ENCODE measurements at regions of chr4 and their contacts with region 1.

Region 1: GRCh38 chr4:184474263-184475095 is at the start of gene IRF2:
- DNase-seq: peak; percentile 98
- H3K4me3 Mint-ChIP-seq: peak within 1 kb of the TSS; percentile 99
- H3K27ac Mint-ChIP-seq: peak within 1 kb of the TSS; percentile 98
- H3K4me1 Mint-ChIP-seq: peaks cover 52% of the 10 kb centered on the region
- H3K27me3 Mint-ChIP-seq: no peaks in the 10 kb centered on the region
- total RNA-seq, gene IRF2: 48.7 and 50.0 TPM in 2 replicates

Region 2: DNA sequence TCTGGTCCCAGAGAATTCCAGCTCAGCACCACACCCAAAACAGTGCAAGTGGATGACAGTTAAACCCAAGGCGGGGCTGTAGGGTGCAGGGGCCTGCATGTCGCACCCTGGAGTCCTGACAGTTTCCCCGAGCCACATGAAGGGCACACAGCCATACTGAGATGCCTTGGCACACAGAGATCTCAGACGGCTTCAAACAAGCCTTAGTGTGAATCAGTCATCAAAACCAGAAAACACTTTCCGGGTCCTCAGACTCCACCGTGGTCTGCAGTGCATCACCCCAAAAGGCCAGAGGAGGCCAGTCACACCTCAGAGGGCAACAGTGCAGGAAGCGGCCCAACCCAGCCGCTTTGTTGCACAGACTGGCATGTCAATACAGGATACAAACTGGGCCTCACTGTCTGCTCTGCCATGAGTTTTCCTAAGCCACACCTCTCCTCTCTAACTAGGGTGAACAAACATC is 192.2 kb before region 1 on chr4:
- intact Hi-C with region 1: loop called (anchors 1 kb)
- DNase-seq: peak; percentile 87
- H3K4me3 Mint-ChIP-seq: peak overlapping the region; percentile 66
- H3K27ac Mint-ChIP-seq: peak overlapping the region; percentile 90
- H3K4me1 Mint-ChIP-seq: peaks cover 62% of the 10 kb centered on the region
- H3K27me3 Mint-ChIP-seq: no peaks in the 10 kb centered on the region

Region 3: DNA sequence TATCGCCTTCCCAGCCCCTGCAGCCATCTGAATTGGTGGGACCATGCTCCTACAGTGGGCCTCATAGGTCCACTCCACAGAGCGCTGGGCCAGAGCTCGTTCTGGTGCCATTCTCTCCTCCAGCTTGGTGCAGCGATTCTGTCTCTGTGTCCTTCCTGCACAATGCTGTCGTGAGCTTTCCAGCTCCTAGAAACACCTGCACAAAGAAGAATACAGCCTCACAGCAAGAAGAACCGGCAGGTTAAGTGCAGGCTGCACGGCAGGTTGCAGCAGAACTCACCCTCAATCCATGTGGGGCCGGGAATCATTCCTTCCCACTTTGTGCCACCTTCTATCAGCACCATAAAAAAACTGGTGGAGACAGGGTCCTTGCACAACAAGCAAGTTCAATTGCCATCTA is 155.6 kb before region 1 on chr4:
- intact Hi-C with region 1: loop called (anchors 2 kb)
- DNase-seq: peak; percentile 56
- H3K4me3 Mint-ChIP-seq: peak overlapping the region; percentile 21
- H3K27ac Mint-ChIP-seq: peak overlapping the region; percentile 93
- H3K4me1 Mint-ChIP-seq: peaks cover 50% of the 10 kb centered on the region
- H3K27me3 Mint-ChIP-seq: no peaks in the 10 kb centered on the region

Region 4: DNA sequence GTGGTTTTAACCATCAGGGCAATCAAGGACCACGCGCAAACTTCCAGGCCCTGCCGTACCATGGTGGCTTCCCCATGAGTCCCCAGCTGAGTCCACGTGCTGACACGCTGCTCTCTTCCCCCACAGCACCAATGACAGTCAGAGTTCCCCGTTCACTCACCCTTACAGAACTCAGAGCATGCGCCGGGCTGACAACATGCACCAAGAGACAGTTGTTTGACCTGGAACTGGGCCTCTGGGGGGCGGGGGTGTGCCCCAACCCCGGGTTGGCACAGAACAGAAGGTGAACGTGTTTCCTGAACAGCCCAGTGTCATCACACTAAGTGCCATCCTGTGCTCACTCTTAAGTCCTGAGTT is 29.5 kb before region 1 on chr4:
- intact Hi-C with region 1: no loop called
- DNase-seq: no peak
- H3K4me3 Mint-ChIP-seq: no peak overlapping the region
- H3K27ac Mint-ChIP-seq: no peak overlapping the region
- H3K4me1 Mint-ChIP-seq: peaks cover 71% of the 10 kb centered on the region
- H3K27me3 Mint-ChIP-seq: no peaks in the 10 kb centered on the region

Region 5: GRCh38 chr4:184457535-184458249 is 16.8 kb before region 1 on chr4:
- intact Hi-C with region 1: loop called (anchors 1 kb)
- DNase-seq: no peak
- H3K4me3 Mint-ChIP-seq: no peak overlapping the region
- H3K27ac Mint-ChIP-seq: peak overlapping the region; percentile 18
- H3K4me1 Mint-ChIP-seq: peaks cover 60% of the 10 kb centered on the region
- H3K27me3 Mint-ChIP-seq: no peaks in the 10 kb centered on the region

Region 6: DNA sequence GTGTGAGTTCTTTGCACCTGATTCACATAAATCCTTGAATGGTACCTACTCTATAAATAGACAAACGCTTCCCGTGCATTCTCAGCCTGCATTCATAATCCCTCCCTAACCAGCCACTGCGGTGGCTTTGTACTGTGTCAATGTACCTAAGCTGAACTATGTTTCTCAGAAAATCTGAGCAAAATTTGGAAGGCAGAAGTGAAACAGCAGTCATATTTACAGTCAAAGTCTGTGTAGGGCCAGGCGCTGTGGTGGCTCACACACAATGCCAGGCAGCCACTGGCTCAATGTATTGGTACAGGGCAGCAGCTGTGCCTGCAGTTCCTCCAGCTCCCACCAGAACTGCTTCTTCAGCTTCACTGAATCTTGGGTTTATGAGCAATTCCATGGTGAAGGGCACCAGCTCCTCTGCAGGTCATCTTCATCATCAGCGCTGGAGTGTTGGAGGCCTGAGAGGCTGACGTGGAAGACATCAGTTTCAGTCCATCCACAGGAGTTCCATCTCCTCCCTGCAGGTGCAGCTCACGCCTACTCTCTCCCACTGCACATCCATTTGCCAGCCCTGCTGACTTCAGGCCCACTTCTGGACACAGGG is 32.1 kb after region 1 on chr4:
- intact Hi-C with region 1: no loop called
- DNase-seq: peak; percentile 82
- H3K4me3 Mint-ChIP-seq: peak overlapping the region; percentile 23
- H3K27ac Mint-ChIP-seq: peak overlapping the region; percentile 64
- H3K4me1 Mint-ChIP-seq: peaks cover 35% of the 10 kb centered on the region
- H3K27me3 Mint-ChIP-seq: no peaks in the 10 kb centered on the region

Region 7: GRCh38 chr4:184538023-184538599 is 63.6 kb after region 1 on chr4:
- intact Hi-C with region 1: loop called (anchors 1 kb)
- DNase-seq: peak; percentile 89
- H3K4me3 Mint-ChIP-seq: peak overlapping the region; percentile 90
- H3K27ac Mint-ChIP-seq: peak overlapping the region; percentile 92
- H3K4me1 Mint-ChIP-seq: peaks cover 33% of the 10 kb centered on the region
- H3K27me3 Mint-ChIP-seq: no peaks in the 10 kb centered on the region

Region 8: GRCh38 chr4:184583738-184584502 is 109.4 kb after region 1 on chr4:
- intact Hi-C with region 1: loop called (anchors 2 kb)
- DNase-seq: peak; percentile 68
- H3K4me3 Mint-ChIP-seq: peak overlapping the region; percentile 19
- H3K27ac Mint-ChIP-seq: peak overlapping the region; percentile 75
- H3K4me1 Mint-ChIP-seq: peaks cover 23% of the 10 kb centered on the region
- H3K27me3 Mint-ChIP-seq: no peaks in the 10 kb centered on the region

Region 9: DNA sequence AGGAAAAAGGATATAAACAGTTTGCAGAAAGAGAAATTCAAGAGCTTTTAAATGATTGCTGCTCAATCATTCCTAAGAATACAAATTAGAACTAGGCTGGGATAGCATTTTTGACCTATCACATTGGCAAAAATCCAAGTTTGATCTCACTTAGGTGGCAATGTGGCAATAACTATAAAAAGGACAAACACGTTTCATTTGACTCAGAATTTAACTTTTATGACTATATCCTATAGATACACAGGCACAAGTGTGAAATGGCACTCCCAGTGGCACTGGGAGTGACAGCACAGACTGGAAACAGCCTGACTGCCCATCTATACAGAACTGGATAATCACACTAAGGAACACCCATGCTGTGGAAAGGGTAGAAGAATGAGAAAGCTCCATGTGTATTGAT is 248.3 kb after region 1 on chr4:
- intact Hi-C with region 1: no loop called
- DNase-seq: no peak
- H3K4me3 Mint-ChIP-seq: no peak overlapping the region
- H3K27ac Mint-ChIP-seq: peak overlapping the region; percentile 21
- H3K4me1 Mint-ChIP-seq: peaks cover 41% of the 10 kb centered on the region
- H3K27me3 Mint-ChIP-seq: no peaks in the 10 kb centered on the region

Region 10: DNA sequence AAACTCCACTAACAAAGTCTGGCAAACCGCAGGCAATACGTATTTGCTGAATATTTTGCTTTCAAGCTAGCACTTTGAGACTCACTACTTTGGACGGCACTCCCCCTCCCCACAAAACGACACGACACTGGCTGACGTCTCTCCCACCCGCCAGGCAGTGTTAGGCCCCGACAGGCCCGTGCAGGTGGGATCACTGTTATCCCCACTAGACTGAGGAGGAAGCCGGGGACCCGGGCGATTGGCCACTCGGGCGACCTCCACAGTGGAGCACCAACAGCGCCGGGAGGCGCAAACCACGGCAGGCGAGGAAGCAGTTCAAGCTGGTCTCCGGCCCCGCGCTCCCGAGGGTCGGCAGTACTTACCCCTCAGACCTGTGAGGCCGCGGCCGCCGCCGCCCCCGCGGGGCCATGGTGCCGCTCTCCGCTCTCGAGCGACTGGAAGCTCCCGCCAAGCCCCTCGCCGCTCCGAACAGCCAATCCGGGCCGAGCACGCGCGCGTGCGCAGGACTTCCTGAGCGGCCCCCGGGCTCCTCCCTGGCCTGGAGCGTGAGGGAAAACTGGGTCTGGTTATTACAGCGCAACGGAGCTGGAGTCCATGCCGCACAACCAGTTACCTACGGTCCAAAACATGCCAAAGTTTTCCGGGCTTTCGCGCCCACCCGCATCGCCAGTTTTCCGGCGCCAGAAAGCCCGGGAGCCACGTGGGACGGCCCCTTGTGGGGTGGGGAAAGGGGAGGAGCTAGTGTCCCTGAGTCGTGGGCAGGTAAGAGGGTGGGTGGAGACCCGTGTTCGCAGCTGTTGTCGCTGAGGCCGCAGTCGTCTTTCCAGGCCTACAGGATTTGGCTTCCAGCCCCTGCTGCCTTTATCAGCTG is 259.4 kb after region 1 on chr4 and contains the start of gene CENPU:
- intact Hi-C with region 1: loop called (anchors 1 kb)
- DNase-seq: peak; percentile 99
- H3K4me3 Mint-ChIP-seq: peak within 1 kb of the TSS; percentile 96
- H3K27ac Mint-ChIP-seq: peak within 1 kb of the TSS; percentile 93
- H3K4me1 Mint-ChIP-seq: peaks cover 41% of the 10 kb centered on the region
- H3K27me3 Mint-ChIP-seq: no peaks in the 10 kb centered on the region
- total RNA-seq, gene CENPU: 71.7 and 75.5 TPM in 2 replicates